ENCODE measurements at regions of chr16 and their contacts with region 1.

Region 1: GRCh38 chr16:22077700-22078313 is 14.5 kb upstream of the VWA3A start:
- DNase-seq: peak; percentile 66

Region 2: DNA sequence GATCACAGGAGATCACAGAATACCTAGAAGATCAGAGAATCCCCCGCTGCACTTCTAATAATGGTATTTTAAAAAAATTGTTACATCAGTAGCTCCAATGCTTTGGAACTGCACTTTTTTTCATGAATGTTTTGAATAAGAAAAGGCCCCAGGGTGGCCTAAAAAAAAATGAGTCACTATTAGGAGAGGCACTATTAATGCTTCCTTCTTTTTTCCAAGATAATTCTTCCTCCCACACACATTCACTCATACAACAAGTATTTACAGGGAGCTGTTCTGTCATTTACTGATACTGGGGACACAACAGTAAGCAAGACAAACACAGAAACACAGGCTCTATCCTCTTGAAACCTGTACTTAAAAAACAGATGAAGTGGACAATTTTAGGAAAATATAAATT is 76.2 kb before region 1 on chr16:
- CTCF ChIA-PET with region 1: interaction called, 37 read pairs
- POLR2A ChIA-PET with region 1: interaction called, 20 read pairs
- DNase-seq: no peak

Region 3: GRCh38 chr16:22035153-22035552 is 42.7 kb before region 1 on chr16:
- CTCF ChIA-PET with region 1: interaction called, 10 read pairs
- POLR2A ChIA-PET with region 1: no interaction called
- DNase-seq: no peak

Region 4: GRCh38 chr16:22063888-22064467 is 13.8 kb before region 1 on chr16:
- CTCF ChIA-PET with region 1: interaction called, 11 read pairs
- POLR2A ChIA-PET with region 1: no interaction called
- DNase-seq: no peak

Region 5: GRCh38 chr16:22117609-22118008 is 39.8 kb after region 1 on chr16:
- CTCF ChIA-PET with region 1: no interaction called
- POLR2A ChIA-PET with region 1: no interaction called
- DNase-seq: no peak

Region 6: DNA sequence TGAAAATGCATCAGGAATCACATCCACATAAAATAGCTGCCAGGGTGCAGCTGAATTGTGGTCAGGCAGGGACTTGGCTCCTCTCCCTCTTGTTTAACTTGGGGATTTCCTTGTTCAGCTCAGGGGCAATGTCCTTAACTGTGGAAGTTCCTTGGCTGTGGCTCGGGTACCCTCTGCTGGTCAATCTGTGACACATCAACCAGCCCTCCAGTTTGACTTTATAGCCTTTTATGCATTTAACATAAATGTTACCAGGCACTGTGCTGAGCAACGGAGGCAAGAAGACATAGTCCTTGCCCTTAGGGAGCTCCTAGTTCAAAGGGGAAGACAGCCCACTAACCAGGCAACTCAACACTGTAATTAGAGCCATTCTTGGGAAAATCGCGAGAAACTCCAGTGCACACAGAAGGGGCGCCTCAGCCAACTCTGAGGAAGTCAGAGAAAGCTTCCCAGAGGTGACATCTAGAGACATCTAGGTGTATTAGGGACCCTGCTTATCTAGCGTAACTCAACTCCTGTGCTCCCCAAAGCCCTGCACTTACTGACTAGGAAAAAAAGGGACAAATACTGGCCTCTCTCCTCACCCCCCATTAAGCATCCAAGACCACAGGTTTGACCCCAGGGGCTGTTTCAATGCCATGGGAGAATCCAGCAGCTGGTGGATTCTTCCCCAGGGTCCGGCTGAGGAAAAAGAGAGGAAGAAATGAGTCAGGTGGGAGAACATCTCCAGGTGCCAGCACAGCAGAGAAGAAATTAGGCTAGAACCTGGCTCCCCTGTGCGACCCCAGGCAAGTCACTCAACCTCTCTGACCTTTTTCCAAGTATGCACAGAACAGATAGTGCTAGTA is 111.0 kb after region 1 on chr16:
- CTCF ChIA-PET with region 1: interaction called, 15 read pairs
- POLR2A ChIA-PET with region 1: interaction called, 3 read pairs
- DNase-seq: peak; percentile 65